ENCODE measurements at regions of chr10 and their contacts with region 1.

Region 1: DNA sequence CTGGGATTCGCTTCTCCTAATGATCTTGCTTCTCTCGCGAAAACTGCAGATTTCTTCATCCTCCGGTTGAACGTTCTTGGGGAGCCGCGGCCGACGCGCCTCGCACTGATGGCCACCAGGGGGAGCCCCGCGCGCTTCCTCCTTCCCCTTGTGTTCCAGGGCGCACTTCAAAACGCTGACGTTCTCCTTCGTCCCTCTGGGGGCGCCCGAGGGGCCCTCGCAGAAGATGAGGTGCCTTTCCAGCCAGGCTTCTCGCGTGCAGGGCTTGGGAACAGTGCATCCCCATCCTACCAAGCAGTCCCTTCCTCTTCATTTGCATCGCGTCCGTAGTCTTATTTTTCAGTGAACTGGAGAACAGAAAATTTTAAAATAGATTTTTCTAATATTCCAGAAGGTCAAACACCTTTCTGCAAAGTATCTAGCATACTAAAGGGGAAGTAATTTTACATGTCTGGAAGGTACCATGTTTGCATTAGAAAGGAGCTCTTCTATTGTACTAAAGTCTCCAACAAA is 22.5 kb downstream of the GSTO2 start:
- DNase-seq: peak; percentile 95
- ATAC-seq: peak; percentile 98 to 99
- H3K4me3 ChIP-seq: no peak overlapping the region
- H3K27ac ChIP-seq: no peak overlapping the region
- H3K4me1 ChIP-seq: no peaks in the 10 kb centered on the region
- H3K27me3 ChIP-seq: no peaks in the 10 kb centered on the region
- CTCF ChIP-seq: peak; percentile 100

Region 2: GRCh38 chr10:104353325-104354048 is 62.0 kb after region 1 on chr10 and contains the start of gene CFAP58:
- intact Hi-C with region 1: loop called (anchors 5 kb)
- DNase-seq: peak; percentile 95
- ATAC-seq: peak; percentile 90 to 94
- H3K4me3 ChIP-seq: peak within 1 kb of the TSS; percentile 50
- H3K27ac ChIP-seq: peak within 1 kb of the TSS; percentile 15
- H3K4me1 ChIP-seq: peaks cover 50% of the 10 kb centered on the region
- H3K27me3 ChIP-seq: no peaks in the 10 kb centered on the region
- CTCF ChIP-seq: peak; percentile 72
- total RNA-seq, gene CFAP58: 1.1 TPM

Region 3: DNA sequence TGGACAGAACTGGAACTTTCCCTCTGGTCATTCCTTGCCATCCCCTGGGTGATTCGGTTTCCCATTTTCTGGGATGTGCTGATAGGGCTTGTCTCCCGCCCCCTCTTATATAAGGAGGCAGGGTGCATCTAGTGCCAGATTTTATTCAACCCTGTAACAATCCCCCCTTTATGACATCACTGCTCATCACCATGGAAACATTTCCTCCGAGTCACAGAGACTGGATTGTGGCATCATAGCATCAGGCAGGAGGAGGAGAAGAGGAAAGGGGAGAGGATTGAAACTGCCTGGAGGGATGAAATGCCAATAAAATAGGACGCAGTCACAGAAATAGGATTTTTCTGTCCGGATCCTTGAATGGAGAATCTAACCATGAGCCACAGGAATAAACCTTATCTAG is 374.6 kb after region 1 on chr10:
- intact Hi-C with region 1: no loop called
- DNase-seq: no peak
- ATAC-seq: no peak
- H3K4me3 ChIP-seq: no peak overlapping the region
- H3K27ac ChIP-seq: no peak overlapping the region
- H3K4me1 ChIP-seq: no peaks in the 10 kb centered on the region
- H3K27me3 ChIP-seq: no peaks in the 10 kb centered on the region
- CTCF ChIP-seq: no peak

Measured in lower lobe of right lung (tissue), 2 donors.